ENCODE measurements at regions of chr2 and their contacts with region 1.

Region 1: GRCh38 chr2:211879323-211879722 is 659.3 kb downstream of the ERBB4 start:
- DNase-seq: peak; percentile 2
- ATAC-seq: peak; percentile 75
- H3K4me3 ChIP-seq: no peak overlapping the region
- H3K27ac ChIP-seq: no peak overlapping the region
- H3K4me1 ChIP-seq: no peaks in the 10 kb centered on the region
- H3K27me3 ChIP-seq: no peaks in the 10 kb centered on the region
- CTCF ChIP-seq: peak in 2 of 3 experiments; percentile 28 to 43; a peak in 3 of 6 replicates
- POLR2A ChIP-seq: no peak
- RAD21 ChIP-seq: peak; percentile 64

Region 2: DNA sequence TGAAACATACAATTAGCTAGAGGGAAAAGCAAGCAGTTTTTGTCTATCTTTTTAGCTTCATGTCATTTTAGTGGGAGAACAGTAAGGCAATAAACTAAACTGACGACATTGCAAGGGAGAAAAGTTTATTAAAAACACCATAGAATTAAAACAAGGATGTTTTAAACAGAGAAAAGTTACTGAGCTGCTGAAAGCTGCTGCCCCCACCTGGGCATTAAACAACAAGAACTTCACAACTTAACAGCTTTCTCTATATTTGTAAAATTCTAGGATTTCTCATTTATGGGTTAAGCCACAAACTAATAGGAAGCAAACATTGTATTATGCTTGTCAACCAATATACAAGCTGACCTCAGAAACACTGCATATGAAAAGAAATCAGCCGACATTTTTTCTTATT is 370.1 kb after region 1 on chr2:
- CTCF ChIA-PET with region 1: interaction called, 10 read pairs
- POLR2A ChIA-PET with region 1: no interaction called
- RAD21 ChIA-PET with region 1: interaction called in 1 of 2 experiments, 4 read pairs
- intact Hi-C with region 1: loop called (anchors 10 kb)
- DNase-seq: no peak
- ATAC-seq: no peak
- H3K4me3 ChIP-seq: no peak overlapping the region
- H3K27ac ChIP-seq: no peak overlapping the region
- H3K4me1 ChIP-seq: no peaks in the 10 kb centered on the region
- H3K27me3 ChIP-seq: no peaks in the 10 kb centered on the region
- CTCF ChIP-seq: peak; percentile 35 to 54 (median 48); a peak in 5 of 6 replicates
- POLR2A ChIP-seq: no peak
- RAD21 ChIP-seq: peak; percentile 61

Region 3: GRCh38 chr2:212520340-212520739 is 641.0 kb after region 1 on chr2:
- CTCF ChIA-PET with region 1: interaction called, 10 read pairs
- POLR2A ChIA-PET with region 1: no interaction called
- RAD21 ChIA-PET with region 1: no interaction called
- intact Hi-C with region 1: loop called (anchors 10 kb)
- DNase-seq: peak; percentile 7
- ATAC-seq: peak; percentile 76
- H3K4me3 ChIP-seq: no peak overlapping the region
- H3K27ac ChIP-seq: no peak overlapping the region
- H3K4me1 ChIP-seq: no peaks in the 10 kb centered on the region
- H3K27me3 ChIP-seq: no peaks in the 10 kb centered on the region
- CTCF ChIP-seq: peak; percentile 28 to 45 (median 40); a peak in 4 of 6 replicates
- POLR2A ChIP-seq: no peak
- RAD21 ChIP-seq: peak; percentile 68

Measured in HCT116 (cell line).